ENCODE measurements at regions of chr18 and their contacts with region 1.

Region 1: DNA sequence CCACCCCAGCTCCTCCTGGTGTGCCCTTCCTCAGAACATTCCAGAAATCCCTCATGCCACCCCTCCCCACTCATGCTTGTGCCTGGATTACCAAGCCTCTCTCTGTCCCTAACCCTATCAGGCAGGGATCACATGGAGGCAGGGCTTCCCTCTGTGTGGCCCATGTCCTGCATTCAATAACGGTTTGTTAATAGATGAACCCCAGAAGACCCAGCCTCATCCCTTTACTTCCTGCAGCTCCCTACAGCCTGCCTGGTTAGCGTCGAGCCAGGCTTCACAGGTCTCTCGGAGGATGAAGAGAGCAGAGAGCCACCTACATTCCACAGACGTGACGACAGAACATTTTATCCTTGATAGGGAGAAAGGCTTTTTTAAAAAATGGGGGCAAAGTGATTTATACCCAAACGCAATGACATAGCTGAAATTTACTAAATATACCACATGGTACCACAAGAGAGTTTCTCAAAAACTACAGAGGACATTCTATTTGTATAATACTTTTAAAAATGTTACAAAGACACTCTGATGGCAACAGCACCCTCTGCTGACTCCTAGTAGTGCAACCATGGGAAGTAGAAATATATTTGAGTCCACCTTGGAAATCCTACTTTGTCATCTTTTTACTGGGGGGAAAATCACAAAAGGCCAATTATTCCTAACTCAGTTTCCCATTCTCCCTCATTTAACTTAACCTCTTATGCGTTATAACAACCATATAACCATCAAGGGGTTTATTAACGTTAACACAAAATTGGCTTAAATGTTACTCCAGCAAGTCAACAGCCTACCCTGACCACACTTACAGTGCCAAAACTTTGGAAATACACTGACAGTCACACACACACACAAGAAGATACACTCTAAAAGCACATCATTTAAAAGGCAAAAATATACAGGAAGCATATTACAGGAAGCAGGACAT is 30.7 kb downstream of the FBXO15 start:
- DNase-seq: peak; percentile 69
- H3K4me3 Mint-ChIP-seq: no peak overlapping the region
- H3K27ac Mint-ChIP-seq: no peak overlapping the region
- H3K4me1 Mint-ChIP-seq: peaks cover 17% of the 10 kb centered on the region
- H3K27me3 Mint-ChIP-seq: no peaks in the 10 kb centered on the region

Region 2: GRCh38 chr18:72762515-72763122 is 1354.3 kb before region 1 on chr18:
- CTCF ChIA-PET with region 1: no interaction called
- intact Hi-C with region 1: loop called (anchors 2 kb)
- DNase-seq: peak; percentile 5
- H3K4me3 Mint-ChIP-seq: no peak overlapping the region
- H3K27ac Mint-ChIP-seq: no peak overlapping the region
- H3K4me1 Mint-ChIP-seq: no peaks in the 10 kb centered on the region
- H3K27me3 Mint-ChIP-seq: no peaks in the 10 kb centered on the region

Region 3: GRCh38 chr18:73891572-73892421 is 225.1 kb before region 1 on chr18:
- CTCF ChIA-PET with region 1: no interaction called
- intact Hi-C with region 1: loop called (anchors 1 kb)
- DNase-seq: peak; percentile 20
- H3K4me3 Mint-ChIP-seq: no peak overlapping the region
- H3K27ac Mint-ChIP-seq: no peak overlapping the region
- H3K4me1 Mint-ChIP-seq: no peaks in the 10 kb centered on the region
- H3K27me3 Mint-ChIP-seq: peaks cover 7% of the 10 kb centered on the region

Region 4: DNA sequence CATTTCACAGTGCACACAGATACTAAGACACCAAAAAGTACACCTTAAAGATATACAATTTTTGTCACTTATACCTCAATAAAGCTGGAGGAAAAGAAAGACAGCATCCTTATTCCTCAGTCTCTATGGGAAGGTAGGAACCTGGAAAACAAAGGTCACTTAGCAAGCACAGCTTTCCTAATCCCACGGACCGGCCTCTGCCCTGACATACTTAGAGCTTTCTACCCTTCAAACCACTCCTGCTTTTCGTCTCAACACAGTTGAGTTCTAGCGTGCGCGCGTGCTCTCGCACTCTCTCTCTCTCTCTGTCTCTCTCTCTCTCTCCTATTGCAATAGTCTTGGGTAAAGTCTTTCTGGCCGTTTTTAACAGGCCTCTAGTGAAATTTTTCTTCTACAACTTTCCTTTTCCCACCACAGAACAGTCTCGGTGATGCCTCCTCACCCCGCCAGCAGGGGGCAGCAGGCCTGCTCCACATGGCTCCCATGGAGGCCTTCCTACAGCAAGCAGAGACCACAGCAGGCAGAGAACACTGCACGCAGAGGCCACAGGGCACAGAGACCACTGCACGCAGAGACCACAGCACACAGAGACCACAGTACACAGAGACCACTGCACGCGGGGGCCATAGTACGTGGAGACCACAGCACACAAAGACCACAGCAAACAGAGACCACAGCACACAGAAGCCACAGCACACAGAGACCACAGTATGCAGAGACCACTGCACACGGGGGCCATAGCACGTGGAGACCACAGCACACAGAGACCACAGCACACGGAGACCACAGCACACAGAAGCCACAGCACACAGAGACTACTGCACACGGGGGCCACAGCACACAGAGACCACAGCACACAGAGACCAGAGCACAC is 76.2 kb before region 1 on chr18:
- CTCF ChIA-PET with region 1: interaction called, 21 read pairs
- intact Hi-C with region 1: loop called (anchors 1 kb)
- DNase-seq: peak; percentile 87
- H3K4me3 Mint-ChIP-seq: no peak overlapping the region
- H3K27ac Mint-ChIP-seq: no peak overlapping the region
- H3K4me1 Mint-ChIP-seq: no peaks in the 10 kb centered on the region
- H3K27me3 Mint-ChIP-seq: peaks cover 2% of the 10 kb centered on the region

Region 5: GRCh38 chr18:74050807-74051206 is 66.1 kb before region 1 on chr18:
- CTCF ChIA-PET with region 1: no interaction called
- intact Hi-C with region 1: no loop called
- DNase-seq: no peak
- H3K4me3 Mint-ChIP-seq: no peak overlapping the region
- H3K27ac Mint-ChIP-seq: no peak overlapping the region
- H3K4me1 Mint-ChIP-seq: peaks cover 6% of the 10 kb centered on the region
- H3K27me3 Mint-ChIP-seq: no peaks in the 10 kb centered on the region

Region 6: GRCh38 chr18:74631212-74631611 is 514.3 kb after region 1 on chr18:
- CTCF ChIA-PET with region 1: no interaction called
- intact Hi-C with region 1: no loop called
- DNase-seq: no peak
- H3K4me3 Mint-ChIP-seq: peak overlapping the region; percentile 64
- H3K27ac Mint-ChIP-seq: peak overlapping the region; percentile 89
- H3K4me1 Mint-ChIP-seq: peaks cover 46% of the 10 kb centered on the region
- H3K27me3 Mint-ChIP-seq: no peaks in the 10 kb centered on the region